ENCODE measurements at regions of chr11 and their contacts with region 1.

Region 1: DNA sequence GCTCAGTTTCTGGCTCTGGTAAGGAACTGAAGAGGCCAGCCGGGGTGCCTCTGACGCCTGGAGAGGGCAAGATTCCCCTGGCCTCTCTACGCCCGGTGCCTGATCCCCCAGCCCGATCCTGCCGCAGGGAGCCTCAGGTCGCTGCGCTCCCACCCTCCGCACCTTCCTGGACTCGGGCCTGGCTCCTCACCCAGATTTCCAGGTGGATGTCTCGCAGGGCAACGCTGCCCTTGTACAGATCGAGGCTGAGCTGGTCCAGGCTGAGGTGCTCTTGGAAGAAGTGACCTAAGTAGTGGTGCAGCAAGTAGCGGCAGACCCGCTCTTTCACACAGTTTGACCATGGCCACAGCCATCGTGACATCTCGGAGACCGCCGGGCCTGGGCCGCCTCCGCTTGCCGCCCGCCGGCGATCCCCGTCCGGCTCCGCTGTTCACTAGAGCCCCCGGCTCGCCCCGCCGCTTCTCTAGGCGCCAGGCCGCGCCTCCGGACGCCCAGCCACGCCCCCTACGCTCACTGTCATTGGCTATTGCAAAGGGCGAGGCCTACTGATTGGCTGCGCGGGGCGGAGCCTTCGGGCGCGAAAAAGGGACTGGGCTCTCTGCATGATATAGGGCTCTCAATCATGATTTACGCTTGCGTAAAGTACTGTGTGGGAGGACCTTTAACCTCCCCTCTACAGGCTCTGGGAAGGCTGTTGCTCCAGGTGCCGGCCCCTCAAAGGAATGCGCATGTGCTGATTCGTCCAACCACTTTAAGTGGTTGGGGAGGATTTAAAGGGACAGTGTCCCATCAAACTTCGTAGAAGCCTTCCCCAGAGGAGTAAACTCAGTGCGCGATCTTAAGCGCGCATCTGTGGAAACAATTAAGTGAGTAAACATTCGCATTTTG is at the start of gene ATG2A:
- DNase-seq: peak; percentile 98 to 99
- ATAC-seq: peak; percentile 99
- H3K4me3 ChIP-seq: peak within 1 kb of the TSS; percentile 80 to 91 (median 90)
- H3K27ac ChIP-seq: peak within 1 kb of the TSS; percentile 84 to 88 (median 86)
- H3K4me1 ChIP-seq: peaks cover 24 to 27% of the 10 kb centered on the region in 2 donors
- H3K27me3 ChIP-seq: no peaks in the 10 kb centered on the region
- CTCF ChIP-seq: no peak
- POLR2A ChIP-seq: peak; percentile 87 to 88
- total RNA-seq, gene ATG2A: 10.7 to 97.5 (median 37.9) TPM

Region 2: GRCh38 chr11:64436000-64436399 is 481.0 kb before region 1 on chr11:
- in situ Hi-C with region 1: no loop called
- intact Hi-C with region 1: no loop called
- DNase-seq: no peak
- ATAC-seq: no peak
- H3K4me3 ChIP-seq: no peak overlapping the region
- H3K27ac ChIP-seq: no peak overlapping the region
- H3K4me1 ChIP-seq: no peaks in the 10 kb centered on the region
- H3K27me3 ChIP-seq: peaks cover 0 to 9% (median 7%) of the 10 kb centered on the region in 3 donors
- CTCF ChIP-seq: no peak
- POLR2A ChIP-seq: no peak

Region 3: DNA sequence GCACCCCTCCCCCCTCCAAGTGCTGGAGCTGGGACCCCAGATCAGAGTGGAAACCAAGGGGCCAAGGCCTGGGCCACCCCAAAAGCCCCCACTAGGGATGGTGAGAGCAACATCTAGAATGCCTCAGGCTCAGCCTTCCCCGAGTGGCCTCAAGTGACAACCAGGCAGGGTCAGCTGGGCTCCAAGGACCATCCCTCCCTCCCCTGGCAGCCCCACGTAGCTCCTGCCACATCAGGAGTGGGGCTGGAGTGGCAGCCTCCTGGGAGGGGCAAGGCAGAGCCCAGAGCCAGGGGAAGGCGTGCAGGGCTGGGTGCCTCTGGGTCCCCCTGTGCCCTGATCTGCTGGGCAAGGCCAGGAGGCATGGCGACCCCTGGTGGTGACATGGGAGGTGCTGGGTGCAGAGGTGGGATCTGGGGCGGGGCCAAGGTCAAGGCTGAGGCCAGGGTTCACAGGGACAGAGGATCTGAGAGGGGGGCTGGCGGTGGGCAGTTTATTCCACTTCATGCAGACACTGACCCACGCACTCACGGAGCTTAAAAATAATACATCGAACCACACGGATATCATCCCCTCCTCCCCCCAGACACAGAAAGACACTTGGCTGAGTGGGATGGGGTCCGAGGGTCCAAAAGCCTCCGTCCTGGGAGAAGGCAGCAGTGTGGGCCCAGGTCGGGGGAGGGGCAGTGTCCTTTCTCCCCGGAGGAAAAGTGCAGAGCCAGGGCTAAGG is 22.8 kb before region 1 on chr11:
- in situ Hi-C with region 1: no loop called
- intact Hi-C with region 1: no loop called
- DNase-seq: peak; percentile 51 to 76
- ATAC-seq: peak; percentile 54 to 85
- H3K4me3 ChIP-seq: no peak overlapping the region
- H3K27ac ChIP-seq: peak overlapping the region in 1 of 4 donors; percentile 18
- H3K4me1 ChIP-seq: peaks cover 0 to 4% of the 10 kb centered on the region in 2 donors
- H3K27me3 ChIP-seq: no peaks in the 10 kb centered on the region
- CTCF ChIP-seq: peak; percentile 80 to 94 (median 90)
- POLR2A ChIP-seq: no peak

Region 4: DNA sequence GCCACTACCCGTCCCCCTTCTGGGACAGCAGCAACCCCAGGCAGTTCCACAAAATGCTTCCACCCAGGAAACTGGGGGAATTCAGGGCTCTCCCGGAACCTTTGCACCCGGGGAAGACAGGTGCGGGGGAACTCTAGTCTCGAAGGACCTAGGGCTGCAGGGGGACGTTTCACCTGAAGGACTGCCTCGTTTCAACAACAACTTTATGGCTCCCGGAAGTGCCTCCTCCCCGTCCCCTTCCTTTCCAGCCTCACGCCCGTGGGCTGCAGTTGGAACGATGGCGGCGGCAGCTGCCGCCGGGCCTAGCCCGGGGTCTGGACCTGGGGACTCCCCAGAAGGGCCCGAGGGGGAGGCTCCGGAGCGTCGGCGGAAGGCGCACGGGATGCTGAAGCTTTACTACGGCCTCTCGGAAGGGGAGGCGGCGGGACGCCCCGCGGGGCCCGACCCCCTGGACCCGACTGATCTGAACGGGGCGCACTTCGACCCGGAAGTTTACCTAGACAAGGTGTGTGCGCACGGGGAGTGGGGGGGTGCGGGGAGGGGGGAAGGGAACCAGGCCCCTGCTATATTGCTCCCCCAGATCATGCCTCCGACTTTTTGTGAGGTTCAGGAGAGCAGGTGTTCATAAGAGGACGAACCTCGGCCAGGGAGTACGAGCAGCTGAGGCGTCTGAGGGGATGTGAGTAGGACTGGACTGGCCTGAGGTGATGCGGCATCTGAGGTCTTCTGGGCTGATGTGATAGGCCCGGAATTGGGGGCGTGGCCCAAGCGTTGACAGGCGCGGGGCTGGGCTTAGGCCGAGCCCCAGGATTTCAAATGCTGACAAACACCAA is 179.2 kb after region 1 on chr11 and contains the start of gene VPS51:
- in situ Hi-C with region 1: no loop called
- intact Hi-C with region 1: loop called (anchors 5 kb)
- DNase-seq: peak; percentile 81 to 88
- ATAC-seq: peak; percentile 93 to 96
- H3K4me3 ChIP-seq: peak within 1 kb of the TSS; percentile 88 to 96 (median 89)
- H3K27ac ChIP-seq: peak within 1 kb of the TSS; percentile 91 to 97 (median 93)
- H3K4me1 ChIP-seq: peaks cover 34 to 36% of the 10 kb centered on the region in 2 donors
- H3K27me3 ChIP-seq: no peaks in the 10 kb centered on the region
- CTCF ChIP-seq: peak in 3 of 5 experiments; percentile 12 to 48 (median 32)
- POLR2A ChIP-seq: peak; percentile 47 to 72
- total RNA-seq, gene VPS51: 206 to 515 (median 266) TPM

Measured in gastrocnemius medialis (tissue), 4 donors.